ENCODE measurements at regions of chr14 and their contacts with region 1.

Region 1: GRCh38 chr14:21233457-21234076 is 35.7 kb downstream of the HNRNPC start:
- DNase-seq: no peak
- ATAC-seq: peak; percentile 25 to 51

Region 2: GRCh38 chr14:20970983-20971704 is 262.4 kb before region 1 on chr14:
- intact Hi-C with region 1: no loop called
- DNase-seq: peak; percentile 88
- ATAC-seq: peak; percentile 96

Region 3: DNA sequence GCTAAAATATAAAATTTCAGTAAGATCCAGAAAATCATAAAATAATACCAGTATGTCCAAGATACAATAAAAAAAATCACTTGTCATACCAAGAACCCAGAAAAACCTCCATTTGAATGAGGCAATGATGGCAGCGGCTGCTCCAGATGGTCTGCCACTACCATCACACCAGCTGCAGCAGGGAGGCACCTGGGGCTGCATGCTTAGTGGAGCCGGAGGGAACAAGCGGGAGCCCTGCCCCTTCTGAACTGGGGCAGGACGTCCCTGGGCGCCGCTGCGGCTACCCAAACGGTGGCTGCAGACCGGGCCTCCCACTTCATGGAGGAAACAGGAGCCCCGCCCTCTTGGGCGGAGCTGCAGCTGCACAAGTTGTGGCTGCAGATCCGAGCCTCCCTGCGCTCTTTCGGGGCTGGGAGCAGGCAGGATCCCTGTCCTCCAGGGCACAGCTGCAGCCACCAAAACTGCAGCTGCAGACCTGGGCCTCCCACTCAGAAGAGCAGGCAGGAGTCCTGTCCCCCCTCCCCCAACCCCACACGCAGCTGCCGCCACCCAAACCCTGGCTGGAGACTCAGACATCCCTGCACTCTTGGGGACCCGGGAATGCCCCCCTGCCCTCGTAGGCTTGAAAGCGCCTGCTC is 41.6 kb before region 1 on chr14:
- intact Hi-C with region 1: no loop called
- DNase-seq: peak; percentile 83
- ATAC-seq: peak; percentile 93 to 95

Region 4: GRCh38 chr14:21269252-21270046 is 35.9 kb after region 1 on chr14 and contains the start of gene HNRNPC:
- intact Hi-C with region 1: loop called in 1 of 2 experiments (anchors 5 kb)
- DNase-seq: peak; percentile 99
- ATAC-seq: peak; percentile 98
- total RNA-seq, gene HNRNPC: 254 TPM

Region 5: GRCh38 chr14:21369949-21370679 is 136.5 kb after region 1 on chr14:
- intact Hi-C with region 1: loop called in 1 of 2 experiments (anchors 10 kb)
- DNase-seq: no peak
- ATAC-seq: no peak